ENCODE measurements at regions of chr16 and their contacts with region 1.

Region 1: DNA sequence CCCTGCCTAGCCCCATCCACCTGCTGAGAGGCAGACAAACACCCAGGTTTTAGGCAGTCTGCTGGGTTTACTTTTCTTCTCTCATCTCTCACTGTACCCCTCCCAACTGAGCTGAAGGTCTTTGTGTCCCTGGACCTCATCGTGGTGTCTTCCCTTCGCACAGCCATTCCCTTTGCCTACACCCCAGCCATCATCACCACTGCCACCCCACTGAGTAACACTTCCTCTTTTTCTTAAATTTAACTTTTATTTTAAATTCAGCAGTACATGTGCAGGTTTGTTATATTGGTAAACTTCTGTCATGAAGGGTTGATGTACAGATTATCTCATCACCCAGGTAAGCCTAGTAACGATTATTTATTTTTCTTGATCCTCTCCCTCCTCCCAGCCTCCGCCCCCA is 188.3 kb upstream of the MON1B start:
- DNase-seq: no peak
- H3K4me3 ChIP-seq: no peak overlapping the region
- H3K27ac ChIP-seq: no peak overlapping the region
- H3K4me1 ChIP-seq: no peaks in the 10 kb centered on the region
- H3K27me3 ChIP-seq: no peaks in the 10 kb centered on the region
- CTCF ChIP-seq: no peak
- POLR2A ChIP-seq: no peak

Region 2: GRCh38 chr16:75938818-75939217 is 1063.8 kb before region 1 on chr16:
- intact Hi-C with region 1: loop called (anchors 5 kb)
- DNase-seq: no peak
- H3K4me3 ChIP-seq: no peak overlapping the region
- H3K27ac ChIP-seq: no peak overlapping the region
- H3K4me1 ChIP-seq: no peaks in the 10 kb centered on the region
- H3K27me3 ChIP-seq: peaks cover 0 to 6% of the 10 kb centered on the region in 2 donors
- CTCF ChIP-seq: no peak
- POLR2A ChIP-seq: no peak